Esophagus muscularis mucosa (tissue), 4 donors: ENCODE measurements at regions of chr19 and their contacts with region 1.

Region 1: GRCh38 chr19:33795370-33796163 is 1.1 kb upstream of the KCTD15 start:
- DNase-seq: no peak
- H3K4me3 ChIP-seq: peak overlapping the region; percentile 71 to 91 (median 82)
- H3K27ac ChIP-seq: peak overlapping the region; percentile 96 to 97 (median 96)
- H3K4me1 ChIP-seq: peaks cover 18 to 42% (median 30%) of the 10 kb centered on the region in 4 donors
- H3K27me3 ChIP-seq: no peaks in the 10 kb centered on the region
- CTCF ChIP-seq: peak; percentile 87 to 91 (median 89)
- EP300 ChIP-seq: no peak
- POLR2A ChIP-seq: no peak

Region 2: DNA sequence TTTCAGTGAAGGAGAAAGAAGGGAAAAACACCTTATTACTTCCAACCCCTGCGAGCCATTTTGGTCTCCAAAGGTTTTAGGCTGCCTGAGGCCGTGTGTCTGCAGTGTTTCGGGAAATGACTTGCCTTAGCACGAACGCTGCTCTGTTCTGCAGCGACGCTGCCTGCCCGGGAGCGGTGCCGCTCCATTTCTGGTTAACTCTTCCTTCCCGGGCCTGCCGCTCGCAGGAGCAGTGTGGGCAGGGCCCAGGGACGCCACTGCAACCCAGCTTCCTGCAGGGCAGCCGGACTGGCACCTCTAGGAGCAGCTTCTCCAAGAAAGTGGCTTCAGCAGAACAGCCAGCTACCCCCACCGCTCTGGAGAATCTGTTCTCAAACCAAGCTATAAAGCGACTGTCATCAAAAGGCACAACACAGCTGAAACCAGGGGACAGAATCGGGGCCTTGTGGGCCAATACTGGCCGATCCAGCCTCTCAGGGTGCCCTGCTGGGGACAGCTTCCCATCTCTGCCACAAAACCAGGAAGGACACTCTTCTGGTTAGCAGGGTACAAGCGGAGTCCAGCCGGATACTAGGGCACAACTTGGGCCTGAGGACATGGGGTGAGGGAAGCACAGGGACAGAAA is 73.3 kb after region 1 on chr19:
- intact Hi-C with region 1: loop called (anchors 2 kb)
- DNase-seq: peak; percentile 90
- H3K4me3 ChIP-seq: peak overlapping the region; percentile 19 to 43 (median 38)
- H3K27ac ChIP-seq: peak overlapping the region in 3 of 4 donors; percentile 14 to 72 (median 62)
- H3K4me1 ChIP-seq: peaks cover 14 to 20% (median 17%) of the 10 kb centered on the region in 4 donors
- H3K27me3 ChIP-seq: no peaks in the 10 kb centered on the region
- CTCF ChIP-seq: peak in 1 of 3 experiments; percentile 38
- EP300 ChIP-seq: no peak
- POLR2A ChIP-seq: no peak

Region 3: GRCh38 chr19:33998739-33999345 is 203.3 kb after region 1 on chr19:
- intact Hi-C with region 1: loop called (anchors 5 kb)
- DNase-seq: no peak
- H3K4me3 ChIP-seq: no peak overlapping the region
- H3K27ac ChIP-seq: no peak overlapping the region
- H3K4me1 ChIP-seq: no peaks in the 10 kb centered on the region
- H3K27me3 ChIP-seq: peaks cover 0 to 20% (median 0%) of the 10 kb centered on the region in 4 donors
- CTCF ChIP-seq: peak; percentile 22 to 44 (median 37)
- EP300 ChIP-seq: no peak
- POLR2A ChIP-seq: no peak